ENCODE measurements at regions of chr15 and their contacts with region 1.

Region 1: DNA sequence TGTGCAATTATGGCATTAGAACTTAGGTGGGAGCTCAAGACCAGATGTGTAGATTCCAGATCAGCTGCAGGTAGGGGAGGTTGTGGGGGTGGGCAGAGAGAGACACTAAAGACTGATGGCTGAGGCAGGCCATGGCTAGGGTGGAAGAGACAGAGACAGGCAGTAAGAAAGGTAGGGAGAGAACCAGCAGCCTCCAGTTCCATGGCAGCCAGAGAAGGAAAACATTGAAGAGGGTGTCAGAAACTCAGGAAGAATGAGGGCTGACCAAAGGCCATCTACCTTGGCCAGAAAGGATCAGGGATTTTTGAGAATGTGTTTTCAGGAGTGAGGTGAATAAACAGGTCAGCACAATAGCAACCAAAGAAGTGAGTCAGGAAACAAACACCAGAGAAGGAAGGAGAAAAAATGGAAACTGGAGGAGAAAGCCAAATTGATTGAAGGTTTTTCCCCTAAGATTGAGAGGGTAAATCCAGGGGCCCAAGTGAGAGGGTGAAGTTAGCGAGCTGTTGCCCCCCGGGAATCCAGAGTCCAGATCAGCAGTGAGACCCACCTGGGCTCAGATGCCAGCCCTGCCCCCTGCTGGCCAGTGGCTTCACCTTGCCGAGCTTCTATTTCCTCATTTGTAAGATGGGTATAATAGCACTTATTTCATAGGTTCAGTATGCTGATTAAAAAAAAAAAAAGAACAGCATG is 41.0 kb downstream of the ABHD2 start:
- DNase-seq: peak; percentile 62
- CTCF ChIP-seq: peak; percentile 65

Region 2: DNA sequence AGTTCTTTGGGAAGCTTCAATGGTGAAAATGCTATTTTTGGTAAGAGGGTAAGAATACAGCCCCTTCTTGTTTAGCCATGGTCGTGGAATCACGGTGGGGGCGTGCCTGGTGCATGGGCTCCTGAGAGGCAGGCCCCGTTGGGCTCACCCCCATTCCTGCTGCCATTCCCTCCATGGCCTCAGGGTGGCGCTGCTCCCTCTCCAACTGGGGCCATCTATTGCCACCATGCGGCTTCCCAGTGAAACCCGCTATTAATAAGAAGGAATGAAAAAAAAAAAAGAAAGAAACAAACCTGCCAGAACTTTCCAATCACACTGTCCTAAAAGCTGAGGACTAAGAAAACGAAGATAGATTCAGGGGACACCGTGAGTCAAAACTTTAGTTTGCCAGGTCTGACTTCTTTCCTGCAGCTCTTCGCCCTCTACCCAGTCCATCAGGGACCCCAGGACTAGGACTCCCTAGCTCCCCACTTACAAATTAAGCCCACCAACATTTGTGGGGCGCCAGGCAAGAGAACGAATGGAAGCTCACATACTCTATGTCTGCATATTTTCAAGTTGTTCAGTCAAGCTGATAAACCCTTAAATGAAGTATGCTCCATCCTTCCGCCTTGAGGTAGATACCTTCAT is 71.7 kb before region 1 on chr15:
- CTCF ChIA-PET with region 1: interaction called, 98 read pairs
- POLR2A ChIA-PET with region 1: no interaction called
- DNase-seq: peak; percentile 83
- CTCF ChIP-seq: peak; percentile 98

Region 3: GRCh38 chr15:89087830-89088604 is 41.3 kb before region 1 on chr15 and contains the start of gene ABHD2:
- CTCF ChIA-PET with region 1: interaction called, 21 read pairs
- POLR2A ChIA-PET with region 1: no interaction called
- DNase-seq: peak; percentile 94
- CTCF ChIP-seq: no peak

Region 4: DNA sequence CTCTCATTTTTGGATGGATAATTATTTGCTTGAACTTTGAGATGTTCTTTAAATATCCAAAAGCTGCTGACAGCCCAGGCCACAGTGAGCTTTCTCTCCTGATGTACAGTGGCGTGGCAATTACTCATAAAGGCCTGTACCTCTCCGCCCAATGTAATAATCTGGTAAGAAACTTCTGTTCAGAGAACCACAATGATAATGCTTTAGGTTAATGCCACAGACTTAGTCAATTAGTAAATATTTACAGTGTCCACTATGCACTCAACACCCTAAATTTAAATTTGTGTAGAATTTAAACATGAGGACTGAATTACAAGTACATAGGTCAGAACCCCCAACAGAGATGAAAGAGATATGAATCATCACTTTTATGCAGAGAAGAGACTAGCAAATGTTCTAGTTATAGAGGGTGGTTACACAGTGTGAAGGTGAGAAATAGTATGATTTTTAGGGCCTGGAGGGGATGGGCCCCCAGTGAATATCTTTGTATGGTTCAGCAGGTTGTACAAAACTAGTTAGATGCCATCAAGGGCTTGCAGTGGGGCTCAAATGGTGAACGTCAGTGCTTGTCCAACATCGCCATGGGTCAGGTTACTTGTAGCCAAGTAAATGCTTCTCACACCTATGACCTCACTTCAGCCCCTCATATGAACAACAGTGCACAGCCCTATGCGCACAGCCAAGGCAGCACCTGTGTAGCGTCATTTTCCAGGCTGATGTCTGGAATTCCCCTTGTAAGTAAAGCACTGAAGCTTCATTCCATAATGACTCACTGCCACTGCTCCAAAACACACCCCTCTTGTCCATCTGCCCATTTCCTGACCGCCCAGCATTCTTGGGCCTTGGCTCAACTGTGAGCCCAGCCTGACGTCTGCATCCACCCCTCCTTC is 27.7 kb before region 1 on chr15:
- CTCF ChIA-PET with region 1: interaction called, 11 read pairs
- POLR2A ChIA-PET with region 1: no interaction called
- DNase-seq: peak; percentile 19
- CTCF ChIP-seq: no peak

Region 5: DNA sequence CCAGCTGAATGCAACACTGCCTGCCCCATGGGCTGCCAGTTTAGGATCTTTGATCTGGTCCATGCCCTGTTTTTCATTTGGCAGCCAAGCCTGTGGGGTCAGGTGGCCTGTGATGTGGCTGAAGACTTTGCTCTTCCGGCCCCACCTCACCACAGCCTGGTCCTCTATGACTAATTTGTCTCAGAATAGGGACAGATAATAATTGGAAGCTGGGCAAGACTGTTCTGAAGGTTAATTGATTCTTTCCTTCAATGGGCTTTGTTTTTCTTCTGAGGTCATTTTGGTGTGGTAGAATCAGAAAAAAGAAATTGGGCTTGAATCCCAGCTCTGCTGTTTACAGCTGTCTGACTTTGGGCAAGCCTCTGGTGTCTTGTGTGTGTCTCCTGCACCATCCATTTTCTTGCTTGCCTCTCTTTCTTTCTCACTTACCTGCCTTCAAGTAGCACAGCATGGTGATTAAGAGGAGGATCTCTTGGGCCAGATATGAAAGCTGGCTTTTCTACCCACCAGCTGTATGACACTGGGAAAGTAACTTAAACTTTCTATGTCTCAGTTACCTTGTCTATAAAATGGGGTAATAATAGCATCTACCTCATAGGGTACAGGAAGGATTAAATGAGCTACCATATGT is 16.8 kb before region 1 on chr15:
- CTCF ChIA-PET with region 1: interaction called, 123 read pairs
- POLR2A ChIA-PET with region 1: interaction called, 3 read pairs
- DNase-seq: peak; percentile 60
- CTCF ChIP-seq: no peak

Region 6: DNA sequence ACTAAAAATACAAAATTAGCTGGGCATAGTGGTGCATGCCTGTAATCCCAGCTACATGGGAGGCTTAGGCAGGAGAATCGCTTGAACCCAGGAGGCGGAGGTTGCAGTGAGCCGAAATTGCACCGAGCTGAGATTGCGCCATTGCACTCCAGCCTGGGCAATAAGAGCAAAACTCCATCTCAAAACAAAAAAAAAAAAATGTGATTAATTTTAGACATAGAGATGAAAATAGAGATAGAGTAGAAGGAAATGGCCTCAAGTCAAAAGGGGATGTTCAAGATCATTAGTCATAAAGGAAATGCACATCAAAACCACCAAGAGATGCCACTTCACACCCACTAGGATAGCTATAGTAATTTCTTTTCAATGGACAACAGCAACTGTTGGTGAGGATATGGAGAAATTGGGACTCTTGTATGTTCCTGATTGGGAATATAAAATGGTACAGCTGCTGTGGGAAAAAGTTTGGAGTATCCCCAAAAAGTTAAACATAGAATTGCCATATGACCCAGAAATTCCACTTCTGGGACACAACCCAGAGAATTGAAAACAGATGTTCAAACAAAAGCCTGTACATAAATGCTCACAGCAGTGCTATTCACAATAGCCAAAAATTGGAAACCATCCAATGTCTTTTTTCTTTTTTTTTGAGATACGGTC is 14.4 kb after region 1 on chr15:
- CTCF ChIA-PET with region 1: interaction called, 17 read pairs
- POLR2A ChIA-PET with region 1: no interaction called
- DNase-seq: no peak
- CTCF ChIP-seq: no peak

Region 7: GRCh38 chr15:89150762-89151664 is 21.7 kb after region 1 on chr15:
- CTCF ChIA-PET with region 1: interaction called, 17 read pairs
- POLR2A ChIA-PET with region 1: no interaction called
- DNase-seq: no peak
- CTCF ChIP-seq: no peak

Measured in GM10248 (cell line).